ENCODE measurements at regions of chr20 and their contacts with region 1.

Region 1: GRCh38 chr20:50790651-50791277 is 4.1 kb upstream of the BCAS4 start:
- DNase-seq: peak; percentile 69 to 75 (median 72)
- H3K4me3 ChIP-seq: peak overlapping the region; percentile 6 to 30
- H3K4me3 Mint-ChIP-seq: peak overlapping the region in 4 of 8 donors; percentile 31 to 61 (median 39)
- H3K27ac ChIP-seq: peak overlapping the region; percentile 53
- H3K27ac Mint-ChIP-seq: peak overlapping the region in 4 of 7 donors; percentile 17 to 81 (median 60)
- H3K4me1 ChIP-seq: peaks cover 20% of the 10 kb centered on the region
- H3K4me1 Mint-ChIP-seq: peaks cover 4 to 11% (median 9%) of the 10 kb centered on the region in 4 donors
- H3K27me3 ChIP-seq: no peaks in the 10 kb centered on the region
- H3K27me3 Mint-ChIP-seq: no peaks in the 10 kb centered on the region

Region 2: DNA sequence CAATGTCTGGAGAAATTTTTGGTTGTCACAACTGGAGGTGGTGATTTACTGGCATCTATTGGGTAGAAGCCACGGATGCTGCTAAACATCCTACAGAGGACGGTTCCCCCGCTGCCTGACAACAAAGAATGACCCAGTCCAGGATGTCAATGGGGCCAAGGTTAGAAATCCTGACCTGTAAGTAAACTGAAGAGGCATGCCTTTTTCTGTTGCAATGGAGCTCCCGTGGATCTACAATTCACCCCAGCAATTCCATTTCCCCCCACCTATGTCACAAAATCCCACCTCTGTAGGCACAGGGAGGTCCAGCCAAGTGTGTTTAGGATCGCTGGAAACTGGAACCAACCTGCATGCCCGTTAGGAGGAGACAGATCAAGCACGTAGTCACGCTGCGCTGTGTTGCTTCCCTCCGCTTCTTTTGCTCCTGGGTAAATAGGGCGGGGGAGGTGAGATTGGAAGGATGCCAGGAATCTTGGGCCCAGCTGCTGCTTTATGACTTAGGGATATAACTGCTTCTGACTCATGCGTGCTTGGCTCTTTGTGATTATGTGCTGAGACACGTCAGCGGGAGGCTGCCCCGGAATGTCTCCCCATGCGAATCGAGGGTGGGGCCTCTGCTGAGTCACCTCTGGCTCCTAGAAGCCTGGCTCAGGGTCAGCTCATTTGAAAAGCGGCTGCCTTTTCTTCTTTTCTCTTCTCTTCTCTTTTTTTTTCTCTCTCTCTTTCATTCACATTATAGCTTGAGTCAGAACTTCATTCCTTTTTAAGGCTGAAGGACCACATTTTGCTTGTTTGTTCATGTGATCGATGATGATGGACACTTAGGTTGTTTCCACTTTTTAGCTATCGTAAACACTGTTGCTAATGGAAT is 624.8 kb before region 1 on chr20:
- CTCF ChIA-PET with region 1: no interaction called
- POLR2A ChIA-PET with region 1: no interaction called
- intact Hi-C with region 1: no loop called
- DNase-seq: peak; percentile 28 to 90 (median 34)
- H3K4me3 ChIP-seq: no peak overlapping the region
- H3K4me3 Mint-ChIP-seq: peak overlapping the region; percentile 35 to 72 (median 64)
- H3K27ac ChIP-seq: no peak overlapping the region
- H3K27ac Mint-ChIP-seq: peak overlapping the region in 5 of 7 donors; percentile 41 to 82 (median 70)
- H3K4me1 ChIP-seq: peaks cover 9% of the 10 kb centered on the region
- H3K4me1 Mint-ChIP-seq: peaks cover 6 to 13% (median 10%) of the 10 kb centered on the region in 4 donors
- H3K27me3 ChIP-seq: no peaks in the 10 kb centered on the region
- H3K27me3 Mint-ChIP-seq: peaks cover 2 to 4% of the 10 kb centered on the region in 2 donors

Region 3: GRCh38 chr20:50750145-50750671 is 40.6 kb before region 1 on chr20:
- CTCF ChIA-PET with region 1: interaction called, 12 read pairs
- POLR2A ChIA-PET with region 1: no interaction called
- intact Hi-C with region 1: no loop called
- DNase-seq: no peak
- H3K4me3 ChIP-seq: no peak overlapping the region
- H3K4me3 Mint-ChIP-seq: no peak overlapping the region
- H3K27ac ChIP-seq: no peak overlapping the region
- H3K27ac Mint-ChIP-seq: no peak overlapping the region
- H3K4me1 ChIP-seq: peaks cover 11% of the 10 kb centered on the region
- H3K4me1 Mint-ChIP-seq: peaks cover 4 to 13% (median 11%) of the 10 kb centered on the region in 4 donors
- H3K27me3 ChIP-seq: no peaks in the 10 kb centered on the region
- H3K27me3 Mint-ChIP-seq: no peaks in the 10 kb centered on the region

Region 4: DNA sequence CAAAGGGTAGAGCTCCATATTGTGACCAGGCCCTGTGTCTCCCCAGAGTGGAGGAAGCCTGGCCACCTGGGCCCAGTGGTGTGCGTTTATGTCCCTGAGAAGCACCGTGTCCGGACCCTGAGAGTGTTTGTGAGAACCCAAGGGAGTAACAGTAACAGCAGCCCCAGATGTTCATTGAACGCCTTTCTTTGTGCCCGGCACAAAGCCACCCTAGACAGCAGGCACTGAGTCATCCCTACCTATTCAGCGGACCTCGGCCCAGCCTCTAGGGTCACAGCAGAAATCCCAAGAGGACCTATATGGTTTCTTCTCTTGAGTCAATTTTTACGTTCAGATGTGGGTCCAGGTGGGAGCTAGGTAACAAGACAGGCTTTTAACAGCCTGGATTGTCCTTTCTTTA is 28.6 kb after region 1 on chr20:
- CTCF ChIA-PET with region 1: interaction called, 21 read pairs
- POLR2A ChIA-PET with region 1: interaction called, 26 read pairs
- intact Hi-C with region 1: no loop called
- DNase-seq: no peak
- H3K4me3 ChIP-seq: no peak overlapping the region
- H3K4me3 Mint-ChIP-seq: no peak overlapping the region
- H3K27ac ChIP-seq: no peak overlapping the region
- H3K27ac Mint-ChIP-seq: peak overlapping the region in 2 of 7 donors; percentile 55 to 57
- H3K4me1 ChIP-seq: peaks cover 15% of the 10 kb centered on the region
- H3K4me1 Mint-ChIP-seq: peaks cover 14 to 32% (median 19%) of the 10 kb centered on the region in 4 donors
- H3K27me3 ChIP-seq: no peaks in the 10 kb centered on the region
- H3K27me3 Mint-ChIP-seq: no peaks in the 10 kb centered on the region

Region 5: DNA sequence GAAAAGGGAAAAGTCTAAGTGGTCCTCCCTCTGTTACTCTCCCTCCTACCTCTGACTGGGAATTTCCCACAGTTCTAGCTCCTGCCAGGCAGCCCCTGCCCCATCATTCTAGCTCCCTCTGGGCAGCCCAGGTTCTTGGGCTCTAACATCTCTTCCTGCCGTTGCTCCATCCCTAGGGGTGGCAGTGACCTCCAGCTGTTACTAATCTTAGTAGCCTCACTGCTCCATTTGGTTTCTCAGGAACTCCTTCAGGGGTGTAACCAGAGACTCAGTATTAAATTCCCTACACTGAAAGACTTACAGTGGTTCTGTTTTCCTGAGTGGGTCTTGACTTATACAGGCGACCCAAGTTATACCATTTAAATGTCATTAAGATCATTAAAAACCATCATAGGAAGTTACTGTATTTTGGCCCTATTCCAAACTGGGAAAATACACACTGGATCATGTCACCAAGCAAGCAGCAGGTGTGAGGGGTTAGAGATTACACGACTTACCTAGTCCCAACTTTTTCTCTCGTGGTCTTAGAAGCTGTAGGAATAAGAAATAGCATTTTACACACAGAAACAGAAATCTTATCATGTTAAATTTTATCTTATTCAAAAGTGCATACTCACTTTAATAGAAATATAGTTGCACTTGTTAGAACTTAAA is 157.5 kb after region 1 on chr20:
- CTCF ChIA-PET with region 1: interaction called, 16 read pairs
- POLR2A ChIA-PET with region 1: no interaction called
- intact Hi-C with region 1: no loop called
- DNase-seq: no peak
- H3K4me3 ChIP-seq: no peak overlapping the region
- H3K4me3 Mint-ChIP-seq: no peak overlapping the region
- H3K27ac ChIP-seq: no peak overlapping the region
- H3K27ac Mint-ChIP-seq: peak overlapping the region in 2 of 7 donors; percentile 50 to 57
- H3K4me1 ChIP-seq: no peaks in the 10 kb centered on the region
- H3K4me1 Mint-ChIP-seq: peaks cover 0 to 9% (median 6%) of the 10 kb centered on the region in 4 donors
- H3K27me3 ChIP-seq: no peaks in the 10 kb centered on the region
- H3K27me3 Mint-ChIP-seq: no peaks in the 10 kb centered on the region

Region 6: GRCh38 chr20:50980851-50981713 is 190.3 kb after region 1 on chr20:
- CTCF ChIA-PET with region 1: interaction called, 17 read pairs
- POLR2A ChIA-PET with region 1: interaction called, 3 read pairs
- intact Hi-C with region 1: loop called (anchors 5 kb)
- DNase-seq: peak; percentile 36 to 59 (median 45)
- H3K4me3 ChIP-seq: no peak overlapping the region
- H3K4me3 Mint-ChIP-seq: no peak overlapping the region
- H3K27ac ChIP-seq: no peak overlapping the region
- H3K27ac Mint-ChIP-seq: no peak overlapping the region
- H3K4me1 ChIP-seq: peaks cover 4% of the 10 kb centered on the region
- H3K4me1 Mint-ChIP-seq: peaks cover 0 to 8% (median 4%) of the 10 kb centered on the region in 4 donors
- H3K27me3 ChIP-seq: no peaks in the 10 kb centered on the region
- H3K27me3 Mint-ChIP-seq: peaks cover 28 to 29% of the 10 kb centered on the region in 2 donors

Region 7: DNA sequence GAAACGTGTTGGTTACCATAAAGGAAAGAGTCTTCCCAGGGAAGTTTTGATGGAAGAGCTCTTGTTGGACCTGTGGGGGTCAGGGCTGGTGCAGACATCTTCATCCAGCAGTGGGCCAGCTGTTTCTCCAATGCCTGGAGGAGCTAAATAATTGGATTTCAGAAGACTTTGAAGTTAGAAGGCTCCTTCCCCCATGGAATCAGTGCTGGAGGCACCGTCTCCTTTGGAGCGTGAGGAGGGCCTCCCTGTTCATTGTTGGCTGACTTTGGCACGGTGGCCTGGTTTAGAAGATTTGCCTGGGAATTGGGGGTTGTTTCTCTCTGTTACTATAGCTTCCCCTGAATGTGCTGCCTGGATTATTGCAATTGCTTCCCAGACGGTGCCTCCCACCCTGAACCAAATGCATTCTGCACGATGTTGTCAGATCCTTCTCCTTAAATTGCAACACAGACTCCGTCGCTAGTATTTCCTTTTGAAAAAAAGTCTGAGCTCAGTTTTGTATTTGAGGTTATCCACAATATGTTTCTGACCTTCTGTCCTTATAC is 259.8 kb after region 1 on chr20:
- CTCF ChIA-PET with region 1: no interaction called
- POLR2A ChIA-PET with region 1: no interaction called
- intact Hi-C with region 1: no loop called
- DNase-seq: no peak
- H3K4me3 ChIP-seq: no peak overlapping the region
- H3K4me3 Mint-ChIP-seq: no peak overlapping the region
- H3K27ac ChIP-seq: no peak overlapping the region
- H3K27ac Mint-ChIP-seq: no peak overlapping the region
- H3K4me1 ChIP-seq: no peaks in the 10 kb centered on the region
- H3K4me1 Mint-ChIP-seq: no peaks in the 10 kb centered on the region
- H3K27me3 ChIP-seq: peaks cover 9% of the 10 kb centered on the region
- H3K27me3 Mint-ChIP-seq: peaks cover 19 to 35% of the 10 kb centered on the region in 2 donors

Region 8: DNA sequence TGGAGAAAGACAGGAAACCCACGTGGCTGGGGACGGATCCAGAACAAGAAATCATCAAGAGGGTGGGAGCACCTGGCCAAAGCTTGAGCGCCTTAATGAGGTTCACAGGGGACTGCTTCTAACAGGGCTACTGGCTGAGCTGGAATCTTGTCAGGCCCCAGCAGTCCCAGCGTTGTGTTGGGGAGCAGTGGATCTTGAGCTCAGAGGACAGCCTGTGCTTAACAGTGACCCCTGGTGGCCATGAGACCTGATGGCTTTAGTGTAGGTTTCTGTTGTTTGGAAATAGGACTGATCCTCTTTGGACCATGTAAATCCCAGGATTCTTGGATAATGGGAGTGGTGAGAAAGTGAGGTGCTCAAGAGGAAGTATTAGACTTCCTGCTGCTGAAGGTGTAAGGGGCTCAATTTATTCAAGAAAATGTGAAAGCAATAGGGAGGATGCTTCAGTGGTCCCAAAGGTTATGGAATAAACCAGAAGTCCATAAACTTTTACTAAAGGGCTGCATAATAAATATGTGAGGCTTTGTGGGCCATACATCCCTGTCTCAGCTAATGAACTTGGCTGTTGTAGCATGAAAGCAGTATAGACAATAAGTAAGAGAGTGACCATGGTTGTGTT is 535.5 kb after region 1 on chr20:
- CTCF ChIA-PET with region 1: interaction called, 3 read pairs
- POLR2A ChIA-PET with region 1: no interaction called
- intact Hi-C with region 1: loop called (anchors 5 kb)
- DNase-seq: peak in 2 of 5 donors; percentile 28 to 37
- H3K4me3 ChIP-seq: no peak overlapping the region
- H3K4me3 Mint-ChIP-seq: no peak overlapping the region
- H3K27ac ChIP-seq: no peak overlapping the region
- H3K27ac Mint-ChIP-seq: no peak overlapping the region
- H3K4me1 ChIP-seq: no peaks in the 10 kb centered on the region
- H3K4me1 Mint-ChIP-seq: no peaks in the 10 kb centered on the region
- H3K27me3 ChIP-seq: no peaks in the 10 kb centered on the region
- H3K27me3 Mint-ChIP-seq: peaks cover 6 to 20% of the 10 kb centered on the region in 2 donors

Measured in CD4-positive, alpha-beta memory T cell (primary cell).